HCT116 (cell line): ENCODE measurements at regions of chr6 and their contacts with region 1.

Region 1: GRCh38 chr6:32752580-32752979 is 10.8 kb downstream of the HLA-DQB2 start:
- DNase-seq: peak; percentile 37
- ATAC-seq: peak; percentile 69
- H3K4me3 ChIP-seq: no peak overlapping the region
- H3K27ac ChIP-seq: no peak overlapping the region
- H3K4me1 ChIP-seq: peaks cover 0 to 9% of the 10 kb centered on the region in 2 experiments; a peak in 1 of 4 replicates
- H3K27me3 ChIP-seq: no peaks in the 10 kb centered on the region
- CTCF ChIP-seq: no peak
- POLR2A ChIP-seq: no peak
- RAD21 ChIP-seq: no peak

Region 2: GRCh38 chr6:32558426-32559057 is 194.0 kb before region 1 on chr6:
- CTCF ChIA-PET with region 1: no interaction called
- POLR2A ChIA-PET with region 1: no interaction called
- RAD21 ChIA-PET with region 1: no interaction called
- intact Hi-C with region 1: no loop called
- DNase-seq: no peak
- ATAC-seq: no peak
- H3K4me3 ChIP-seq: no peak overlapping the region
- H3K27ac ChIP-seq: no peak overlapping the region
- H3K4me1 ChIP-seq: no peaks in the 10 kb centered on the region
- H3K27me3 ChIP-seq: no peaks in the 10 kb centered on the region
- CTCF ChIP-seq: peak in 1 of 3 experiments; percentile 7; a peak in 1 of 6 replicates
- POLR2A ChIP-seq: no peak
- RAD21 ChIP-seq: no peak

Region 3: DNA sequence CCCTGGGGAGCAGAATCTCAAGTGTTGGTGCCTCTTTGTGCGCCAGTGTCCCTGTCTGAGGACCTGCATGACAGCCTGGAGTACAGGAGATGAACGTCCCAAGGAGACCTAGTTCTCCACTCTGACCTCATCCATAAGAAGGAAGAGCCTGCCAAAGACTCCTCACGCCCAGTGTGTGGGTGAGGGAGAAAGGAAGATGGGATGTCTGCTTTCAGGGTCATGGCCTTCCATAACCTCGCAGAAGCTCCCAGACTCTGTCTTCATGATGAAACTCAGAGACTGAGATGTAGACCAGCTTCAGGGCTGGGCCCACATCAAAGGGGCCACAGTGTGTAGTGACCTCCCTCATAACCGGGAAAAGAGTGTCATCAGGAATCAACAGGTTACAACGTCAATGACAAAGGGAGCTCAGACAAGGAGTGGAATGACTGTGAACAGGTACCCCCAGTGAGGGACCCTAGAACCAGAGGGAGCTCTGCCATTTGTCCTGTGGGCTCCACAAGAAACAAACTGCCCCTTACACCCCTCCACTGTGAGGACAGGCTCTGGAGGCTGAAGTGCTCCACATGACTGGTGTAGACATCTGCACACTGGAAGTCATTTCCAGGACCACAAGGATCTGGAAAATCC is 94.2 kb before region 1 on chr6:
- CTCF ChIA-PET with region 1: no interaction called
- POLR2A ChIA-PET with region 1: no interaction called
- RAD21 ChIA-PET with region 1: no interaction called
- intact Hi-C with region 1: loop called (anchors 5 kb)
- DNase-seq: no peak
- ATAC-seq: no peak
- H3K4me3 ChIP-seq: no peak overlapping the region
- H3K27ac ChIP-seq: no peak overlapping the region
- H3K4me1 ChIP-seq: no peaks in the 10 kb centered on the region
- H3K27me3 ChIP-seq: no peaks in the 10 kb centered on the region
- CTCF ChIP-seq: no peak
- POLR2A ChIP-seq: no peak
- RAD21 ChIP-seq: no peak

Region 4: GRCh38 chr6:32885698-32886286 is 133.2 kb after region 1 on chr6:
- CTCF ChIA-PET with region 1: no interaction called
- POLR2A ChIA-PET with region 1: no interaction called
- RAD21 ChIA-PET with region 1: no interaction called
- intact Hi-C with region 1: no loop called
- DNase-seq: peak; percentile 72
- ATAC-seq: peak; percentile 80
- H3K4me3 ChIP-seq: no peak overlapping the region
- H3K27ac ChIP-seq: no peak overlapping the region
- H3K4me1 ChIP-seq: peaks cover 0 to 7% of the 10 kb centered on the region in 2 experiments; a peak in 2 of 4 replicates
- H3K27me3 ChIP-seq: no peaks in the 10 kb centered on the region
- CTCF ChIP-seq: peak; percentile 33 to 80 (median 64)
- POLR2A ChIP-seq: no peak
- RAD21 ChIP-seq: peak; percentile 86